ENCODE measurements at regions of chr16 and their contacts with region 1.

Region 1: GRCh38 chr16:88737298-88738150 is 31.2 kb downstream of the CTU2 start:
- H3K4me3 ChIP-seq: no peak overlapping the region
- H3K27ac ChIP-seq: no peak overlapping the region; the same call in 1 of the 2 replicates
- H3K4me1 ChIP-seq: no peaks in the 10 kb centered on the region; the same call in 1 of the 2 replicates
- CTCF ChIP-seq: peak; percentile 99

Region 2: DNA sequence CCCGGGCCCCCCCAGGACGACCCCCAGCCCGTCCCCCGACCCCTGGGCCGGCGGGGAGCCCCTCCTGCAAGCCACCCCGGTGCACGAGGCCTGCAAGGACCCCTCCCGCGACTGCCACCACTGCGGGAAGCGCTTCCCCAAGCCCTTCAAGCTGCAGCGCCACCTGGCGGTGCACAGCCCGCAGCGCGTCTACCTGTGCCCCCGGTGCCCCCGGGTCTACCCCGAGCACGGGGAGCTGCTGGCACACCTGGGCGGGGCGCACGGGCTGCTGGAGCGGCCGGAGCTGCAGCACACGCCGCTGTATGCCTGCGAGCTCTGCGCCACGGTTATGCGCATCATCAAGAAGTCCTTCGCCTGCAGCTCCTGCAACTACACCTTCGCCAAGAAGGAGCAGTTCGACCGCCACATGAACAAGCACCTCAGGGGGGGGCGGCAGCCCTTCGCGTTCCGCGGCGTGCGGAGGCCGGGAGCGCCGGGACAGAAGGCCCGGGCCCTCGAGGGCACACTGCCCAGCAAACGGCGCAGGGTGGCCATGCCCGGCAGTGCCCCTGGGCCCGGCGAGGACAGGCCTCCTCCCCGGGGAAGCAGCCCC is 300.1 kb before region 1 on chr16:
- CTCF ChIA-PET with region 1: no interaction called
- POLR2A ChIA-PET with region 1: no interaction called
- H3K4me3 ChIP-seq: no peak overlapping the region
- H3K27ac ChIP-seq: no peak overlapping the region
- H3K4me1 ChIP-seq: no peaks in the 10 kb centered on the region
- CTCF ChIP-seq: peak; percentile 75

Region 3: DNA sequence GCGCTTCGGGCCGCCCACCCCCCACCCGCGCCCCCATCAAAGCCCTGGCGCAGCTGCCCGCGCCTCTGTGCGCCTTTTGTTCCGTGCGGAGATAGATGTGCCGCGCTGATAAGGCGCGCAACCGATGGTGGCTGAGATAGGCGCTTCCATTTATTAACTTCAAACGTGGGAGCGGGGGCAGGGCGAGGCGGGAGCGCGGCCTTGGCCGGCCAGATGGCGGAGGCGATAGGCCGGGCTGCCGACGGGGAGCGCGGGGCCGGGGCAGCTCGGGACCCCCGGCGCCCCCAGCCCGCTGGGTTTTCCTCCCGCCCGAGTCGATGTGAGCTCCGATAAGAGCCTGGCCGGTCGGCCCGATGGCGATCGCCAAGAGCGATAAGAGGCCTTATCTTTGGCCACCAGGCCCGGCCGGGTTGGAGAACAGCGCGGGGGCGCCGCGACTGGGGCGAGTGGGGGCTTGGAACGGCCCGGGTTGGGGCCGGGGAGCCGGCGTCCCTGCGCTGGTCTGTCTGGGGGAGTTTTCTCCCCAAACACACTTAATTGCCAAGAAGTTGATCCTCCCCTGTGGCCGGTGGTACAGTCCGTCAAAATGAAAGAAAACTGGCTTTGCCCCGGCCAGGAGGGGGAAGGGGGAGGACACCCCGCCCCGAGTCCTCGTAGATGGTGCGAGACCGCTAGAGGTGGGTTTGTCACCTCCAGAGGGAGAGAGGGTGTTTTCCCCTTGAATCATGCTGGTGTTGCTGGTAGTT is 281.7 kb before region 1 on chr16:
- CTCF ChIA-PET with region 1: no interaction called
- POLR2A ChIA-PET with region 1: no interaction called
- H3K4me3 ChIP-seq: peak overlapping the region; percentile 52
- H3K27ac ChIP-seq: peak overlapping the region; percentile 40; the same call in 1 of the 2 replicates
- H3K4me1 ChIP-seq: peaks cover 5% of the 10 kb centered on the region; the same call in 1 of the 2 replicates
- CTCF ChIP-seq: no peak

Region 4: GRCh38 chr16:88539652-88540345 is 197.7 kb before region 1 on chr16:
- CTCF ChIA-PET with region 1: no interaction called
- POLR2A ChIA-PET with region 1: no interaction called
- H3K4me3 ChIP-seq: no peak overlapping the region
- H3K27ac ChIP-seq: no peak overlapping the region
- H3K4me1 ChIP-seq: peaks cover 6% of the 10 kb centered on the region; the same call in 1 of the 2 replicates
- CTCF ChIP-seq: no peak

Region 5: DNA sequence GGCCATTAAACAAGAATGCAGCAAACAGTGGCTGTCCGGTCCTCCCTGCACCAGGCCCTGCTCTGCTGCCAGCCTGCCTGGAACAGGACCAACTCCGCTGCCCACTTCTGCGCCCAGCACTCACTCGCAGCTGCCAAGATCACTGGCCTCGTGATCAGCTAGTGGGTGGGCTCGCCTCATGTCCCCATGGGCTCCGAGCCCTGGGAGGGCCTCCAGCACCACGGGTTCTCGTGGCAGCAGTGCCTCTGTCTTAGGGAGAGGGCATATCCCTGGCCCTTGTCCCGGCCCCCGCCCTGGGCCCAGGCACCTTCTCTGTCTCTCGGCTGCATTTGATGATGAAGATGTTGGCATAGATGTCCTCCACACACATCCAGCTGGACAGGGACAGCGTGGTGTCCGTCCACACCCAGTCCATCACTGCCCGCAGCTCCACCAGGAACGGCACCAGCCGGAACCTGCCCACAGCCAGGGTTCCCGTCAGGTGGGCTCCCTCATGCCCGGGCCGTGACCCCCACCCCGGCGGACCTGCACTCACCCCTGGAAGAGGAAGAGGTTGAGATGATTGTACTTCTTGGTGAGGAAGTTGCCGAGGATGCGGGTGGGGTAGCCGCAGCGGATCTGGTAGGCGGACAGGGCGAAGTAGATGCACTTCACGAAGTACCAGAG is 18.1 kb before region 1 on chr16:
- CTCF ChIA-PET with region 1: interaction called, 22 read pairs
- POLR2A ChIA-PET with region 1: interaction called, 3 read pairs
- H3K4me3 ChIP-seq: no peak overlapping the region
- H3K27ac ChIP-seq: no peak overlapping the region
- H3K4me1 ChIP-seq: no peaks in the 10 kb centered on the region
- CTCF ChIP-seq: no peak

Region 6: DNA sequence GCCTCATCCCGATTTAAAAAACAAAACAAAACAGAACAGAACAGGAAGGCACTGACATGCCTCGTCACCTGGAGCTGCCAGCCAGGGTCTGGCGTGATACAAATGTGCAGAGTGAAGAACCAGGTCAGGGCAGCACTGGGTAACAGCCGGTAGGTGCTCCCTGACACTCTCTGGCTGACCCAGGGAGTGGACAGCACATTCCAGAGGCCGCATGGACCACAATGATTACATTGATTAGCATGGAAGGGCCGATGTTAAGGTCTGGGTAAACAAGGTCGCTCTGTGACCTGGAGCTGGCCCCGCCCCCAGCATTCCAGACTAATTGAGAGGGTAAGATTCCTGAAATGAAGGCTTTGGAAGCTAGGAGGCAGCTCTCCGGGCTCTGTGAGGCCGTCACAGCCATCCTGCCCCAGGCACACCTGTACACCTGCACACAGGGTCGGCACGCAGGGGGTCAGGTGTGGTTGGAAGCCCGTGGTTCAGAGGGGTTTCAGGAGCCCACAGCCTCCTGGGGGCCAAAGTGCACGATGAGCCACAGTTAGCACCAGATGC is 26.1 kb after region 1 on chr16:
- CTCF ChIA-PET with region 1: interaction called, 58 read pairs
- POLR2A ChIA-PET with region 1: interaction called, 3 read pairs
- H3K4me3 ChIP-seq: no peak overlapping the region
- H3K27ac ChIP-seq: no peak overlapping the region
- H3K4me1 ChIP-seq: peaks cover 13% of the 10 kb centered on the region
- CTCF ChIP-seq: no peak

Region 7: GRCh38 chr16:88785106-88785924 is 47.8 kb after region 1 on chr16 and contains the start of gene PIEZO1:
- CTCF ChIA-PET with region 1: interaction called, 7 read pairs
- POLR2A ChIA-PET with region 1: interaction called, 19 read pairs
- H3K4me3 ChIP-seq: peak within 1 kb of the TSS; percentile 53
- H3K27ac ChIP-seq: peak within 1 kb of the TSS; percentile 76; the same call in 1 of the 2 replicates
- H3K4me1 ChIP-seq: peaks cover 22% of the 10 kb centered on the region
- CTCF ChIP-seq: peak; percentile 94

Region 8: GRCh38 chr16:88799569-88800276 is 62.2 kb after region 1 on chr16:
- CTCF ChIA-PET with region 1: interaction called, 18 read pairs
- POLR2A ChIA-PET with region 1: interaction called, 6 read pairs
- H3K4me3 ChIP-seq: no peak overlapping the region
- H3K27ac ChIP-seq: no peak overlapping the region
- H3K4me1 ChIP-seq: no peaks in the 10 kb centered on the region
- CTCF ChIP-seq: no peak